ENCODE measurements at regions of chr1 and their contacts with region 1.

Region 1: GRCh38 chr1:77533660-77534305 is 148.7 kb downstream of the ZZZ3 start:
- DNase-seq: peak; percentile 60 to 65 (median 64)
- H3K4me3 ChIP-seq: no peak overlapping the region
- H3K4me3 Mint-ChIP-seq: peak overlapping the region in 5 of 8 donors; percentile 17 to 65 (median 32)
- H3K27ac ChIP-seq: no peak overlapping the region
- H3K27ac Mint-ChIP-seq: peak overlapping the region in 3 of 7 donors; percentile 32 to 83 (median 39)
- H3K4me1 ChIP-seq: peaks cover 3% of the 10 kb centered on the region
- H3K4me1 Mint-ChIP-seq: peaks cover 4 to 8% (median 5%) of the 10 kb centered on the region in 4 donors
- H3K27me3 ChIP-seq: no peaks in the 10 kb centered on the region
- H3K27me3 Mint-ChIP-seq: no peaks in the 10 kb centered on the region

Region 2: GRCh38 chr1:77156214-77156613 is 377.6 kb before region 1 on chr1:
- CTCF ChIA-PET with region 1: interaction called, 10 read pairs
- POLR2A ChIA-PET with region 1: no interaction called
- intact Hi-C with region 1: no loop called
- DNase-seq: no peak
- H3K4me3 ChIP-seq: no peak overlapping the region
- H3K4me3 Mint-ChIP-seq: no peak overlapping the region
- H3K27ac ChIP-seq: no peak overlapping the region
- H3K27ac Mint-ChIP-seq: peak overlapping the region in 1 of 7 donors; percentile 2
- H3K4me1 ChIP-seq: no peaks in the 10 kb centered on the region
- H3K4me1 Mint-ChIP-seq: peaks cover 1 to 8% (median 4%) of the 10 kb centered on the region in 4 donors
- H3K27me3 ChIP-seq: no peaks in the 10 kb centered on the region
- H3K27me3 Mint-ChIP-seq: no peaks in the 10 kb centered on the region

Region 3: GRCh38 chr1:77281491-77282186 is 252.1 kb before region 1 on chr1 and contains the start of gene AK5:
- CTCF ChIA-PET with region 1: no interaction called
- POLR2A ChIA-PET with region 1: no interaction called
- intact Hi-C with region 1: loop called (anchors 10 kb)
- DNase-seq: peak in 4 of 5 donors; percentile 36 to 39 (median 39)
- H3K4me3 ChIP-seq: peak within 1 kb of the TSS in 1 of 2 donors; percentile 54
- H3K4me3 Mint-ChIP-seq: peak within 1 kb of the TSS; percentile 78 to 91 (median 84)
- H3K27ac ChIP-seq: no peak within 1 kb of the TSS
- H3K27ac Mint-ChIP-seq: peak within 1 kb of the TSS in 2 of 7 donors; percentile 24 to 72
- H3K4me1 ChIP-seq: peaks cover 30% of the 10 kb centered on the region
- H3K4me1 Mint-ChIP-seq: peaks cover 21 to 33% (median 27%) of the 10 kb centered on the region in 4 donors
- H3K27me3 ChIP-seq: no peaks in the 10 kb centered on the region
- H3K27me3 Mint-ChIP-seq: peaks cover 9% of the 10 kb centered on the region in 2 donors
- total RNA-seq, gene AK5: 17.0 to 25.5 TPM

Region 4: GRCh38 chr1:77370583-77371306 is 163.0 kb before region 1 on chr1:
- CTCF ChIA-PET with region 1: no interaction called
- POLR2A ChIA-PET with region 1: no interaction called
- intact Hi-C with region 1: loop called (anchors 10 kb)
- DNase-seq: no peak
- H3K4me3 ChIP-seq: no peak overlapping the region
- H3K4me3 Mint-ChIP-seq: no peak overlapping the region
- H3K27ac ChIP-seq: no peak overlapping the region
- H3K27ac Mint-ChIP-seq: no peak overlapping the region
- H3K4me1 ChIP-seq: peaks cover 10% of the 10 kb centered on the region
- H3K4me1 Mint-ChIP-seq: peaks cover 10 to 35% (median 15%) of the 10 kb centered on the region in 4 donors
- H3K27me3 ChIP-seq: no peaks in the 10 kb centered on the region
- H3K27me3 Mint-ChIP-seq: no peaks in the 10 kb centered on the region

Region 5: DNA sequence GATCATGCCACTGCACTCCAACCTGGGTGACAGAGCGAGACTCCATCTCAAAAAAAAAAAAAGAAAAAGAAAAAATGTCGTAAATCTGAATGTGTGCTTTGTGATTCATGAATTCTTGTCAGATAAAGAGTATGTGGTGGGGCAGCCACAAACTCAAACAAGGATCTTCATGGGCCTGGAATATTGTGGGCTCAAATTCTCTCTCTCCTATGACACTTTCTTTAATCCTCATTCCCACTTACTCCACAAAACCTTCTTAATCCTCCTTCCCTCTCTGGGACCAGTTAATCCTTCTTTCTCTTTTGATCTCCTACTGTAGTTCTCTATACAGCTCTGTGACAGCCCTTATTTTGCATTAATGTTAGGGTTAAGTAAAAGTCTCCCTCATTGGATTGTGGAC is 139.6 kb before region 1 on chr1:
- CTCF ChIA-PET with region 1: no interaction called
- POLR2A ChIA-PET with region 1: no interaction called
- intact Hi-C with region 1: no loop called
- DNase-seq: no peak
- H3K4me3 ChIP-seq: no peak overlapping the region
- H3K4me3 Mint-ChIP-seq: no peak overlapping the region
- H3K27ac ChIP-seq: no peak overlapping the region
- H3K27ac Mint-ChIP-seq: peak overlapping the region in 1 of 7 donors; percentile 3
- H3K4me1 ChIP-seq: no peaks in the 10 kb centered on the region
- H3K4me1 Mint-ChIP-seq: peaks cover 0 to 4% (median under 1%) of the 10 kb centered on the region in 4 donors
- H3K27me3 ChIP-seq: no peaks in the 10 kb centered on the region
- H3K27me3 Mint-ChIP-seq: peaks cover 2 to 3% of the 10 kb centered on the region in 2 donors

Region 6: DNA sequence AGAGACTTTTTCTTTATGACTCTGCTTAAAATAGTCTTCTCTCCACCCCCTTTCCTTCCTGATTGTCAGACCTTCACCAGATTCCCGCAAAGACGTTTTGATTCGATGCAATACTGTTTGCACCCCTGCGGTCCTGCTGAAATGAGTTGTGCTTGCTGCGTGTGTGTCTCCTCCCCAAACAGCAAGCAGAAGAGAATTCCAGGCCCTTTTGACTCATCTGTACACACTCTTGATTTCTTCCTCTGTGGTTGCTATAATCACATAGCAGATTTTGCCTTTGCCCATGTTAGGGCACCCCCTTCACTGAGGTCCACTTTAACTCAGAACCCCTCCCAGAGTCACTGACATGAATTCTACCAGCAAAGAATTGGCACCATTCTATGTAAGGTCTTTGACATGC is 12.2 kb after region 1 on chr1:
- CTCF ChIA-PET with region 1: interaction called, 13 read pairs
- POLR2A ChIA-PET with region 1: no interaction called
- intact Hi-C with region 1: no loop called
- DNase-seq: no peak
- H3K4me3 ChIP-seq: no peak overlapping the region
- H3K4me3 Mint-ChIP-seq: no peak overlapping the region
- H3K27ac ChIP-seq: no peak overlapping the region
- H3K27ac Mint-ChIP-seq: peak overlapping the region in 1 of 7 donors; percentile 30
- H3K4me1 ChIP-seq: no peaks in the 10 kb centered on the region
- H3K4me1 Mint-ChIP-seq: no peaks in the 10 kb centered on the region
- H3K27me3 ChIP-seq: no peaks in the 10 kb centered on the region
- H3K27me3 Mint-ChIP-seq: peaks cover 0 to 2% of the 10 kb centered on the region in 2 donors

Measured in CD4-positive, alpha-beta memory T cell (primary cell).